ENCODE measurements at regions of chr18 and their contacts with region 1.

Region 1: GRCh38 chr18:44679056-44679905 is 1.4 kb upstream of the SETBP1 start:
- DNase-seq: peak; percentile 87
- H3K4me3 ChIP-seq: peak overlapping the region; percentile 67
- H3K27ac ChIP-seq: peak overlapping the region; percentile 88
- H3K4me1 ChIP-seq: peaks cover 22% of the 10 kb centered on the region
- H3K27me3 ChIP-seq: peaks cover 5% of the 10 kb centered on the region
- CTCF ChIP-seq: peak; percentile 63

Region 2: DNA sequence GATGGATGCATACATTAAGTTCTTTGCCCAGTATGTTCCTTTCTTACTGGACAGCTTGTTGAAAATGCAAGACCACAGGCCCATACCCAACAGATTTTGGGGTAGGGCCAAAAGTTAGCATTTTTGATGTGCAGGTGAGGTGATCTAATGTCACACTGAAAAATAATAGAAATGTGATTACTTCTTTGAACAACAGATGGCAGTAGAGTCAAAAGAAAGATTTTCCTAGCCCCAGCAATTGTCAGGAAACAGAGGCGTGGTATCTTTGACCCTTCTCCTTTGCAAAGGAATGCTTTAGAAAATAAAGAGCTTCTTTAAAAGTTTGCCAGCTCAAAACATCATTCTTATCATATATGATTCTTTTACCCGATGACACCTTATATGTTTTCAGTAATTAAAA is 1058.3 kb before region 1 on chr18:
- CTCF ChIA-PET with region 1: interaction called, 3 read pairs
- POLR2A ChIA-PET with region 1: no interaction called
- intact Hi-C with region 1: loop called (anchors 10 kb)
- DNase-seq: peak; percentile 69
- H3K4me3 ChIP-seq: no peak overlapping the region
- H3K27ac ChIP-seq: no peak overlapping the region
- H3K4me1 ChIP-seq: peaks cover 26% of the 10 kb centered on the region
- H3K27me3 ChIP-seq: no peaks in the 10 kb centered on the region
- CTCF ChIP-seq: peak; percentile 66

Region 3: DNA sequence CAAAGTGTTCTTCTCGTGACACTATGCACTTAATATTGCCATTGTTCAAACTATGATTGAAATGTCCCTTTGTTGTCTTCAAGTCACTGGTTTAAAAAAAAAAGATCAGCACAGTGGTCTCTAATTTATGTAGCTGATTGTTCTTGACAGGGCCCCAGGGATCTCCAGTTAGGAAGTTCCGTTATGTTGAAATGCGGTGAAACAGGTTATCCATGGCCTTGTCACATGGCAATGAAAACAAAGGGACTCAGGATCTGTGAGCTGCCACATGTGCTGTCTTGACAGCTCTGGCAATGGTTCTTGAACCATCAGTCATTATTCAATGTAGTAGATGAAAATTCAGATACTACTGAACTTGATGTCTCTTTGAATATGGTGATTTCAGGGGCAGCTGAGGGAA is 148.8 kb after region 1 on chr18:
- CTCF ChIA-PET with region 1: interaction called, 5 read pairs
- POLR2A ChIA-PET with region 1: interaction called, 15 read pairs
- intact Hi-C with region 1: no loop called
- DNase-seq: peak; percentile 77
- H3K4me3 ChIP-seq: no peak overlapping the region
- H3K27ac ChIP-seq: peak overlapping the region; percentile 71
- H3K4me1 ChIP-seq: peaks cover 41% of the 10 kb centered on the region
- H3K27me3 ChIP-seq: no peaks in the 10 kb centered on the region
- CTCF ChIP-seq: no peak

Region 4: DNA sequence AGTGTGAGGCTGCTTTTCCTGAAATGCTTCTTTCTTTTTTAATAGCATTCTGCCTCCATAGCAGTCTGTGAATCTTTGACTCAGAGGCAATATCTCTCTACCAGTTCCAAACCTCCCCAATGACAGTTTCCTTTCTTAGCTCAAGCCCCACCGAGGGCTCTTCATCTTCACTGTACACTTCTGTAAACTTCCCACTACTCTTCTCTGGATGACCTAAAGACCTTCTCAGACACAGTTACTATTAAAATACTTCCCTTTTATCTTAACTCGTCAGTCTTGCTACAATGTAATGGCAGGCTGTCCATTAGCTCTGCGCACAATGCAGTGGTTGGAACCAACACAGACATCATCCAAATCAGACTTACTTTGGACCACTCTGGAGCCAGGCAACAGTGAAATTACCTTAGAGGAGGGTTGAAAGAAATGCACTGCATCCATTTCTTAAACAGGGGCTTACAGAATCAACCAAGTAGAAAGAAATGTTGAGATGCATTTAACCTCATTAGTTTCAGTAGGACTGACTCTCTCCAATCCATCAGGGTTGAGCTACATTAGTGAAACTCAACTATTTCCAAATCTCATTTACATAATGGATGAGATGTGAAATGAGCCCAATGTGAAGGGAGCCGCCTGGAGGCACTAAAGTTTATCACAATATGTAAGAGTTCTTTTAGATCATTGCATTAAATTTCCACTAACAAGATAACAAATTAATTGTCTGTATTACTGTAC is 345.2 kb after region 1 on chr18:
- CTCF ChIA-PET with region 1: no interaction called
- POLR2A ChIA-PET with region 1: no interaction called
- intact Hi-C with region 1: loop called (anchors 5 kb)
- DNase-seq: peak; percentile 14
- H3K4me3 ChIP-seq: no peak overlapping the region
- H3K27ac ChIP-seq: no peak overlapping the region
- H3K4me1 ChIP-seq: no peaks in the 10 kb centered on the region
- H3K27me3 ChIP-seq: no peaks in the 10 kb centered on the region
- CTCF ChIP-seq: peak; percentile 37; the same call in 1 of the 2 replicates

Region 5: DNA sequence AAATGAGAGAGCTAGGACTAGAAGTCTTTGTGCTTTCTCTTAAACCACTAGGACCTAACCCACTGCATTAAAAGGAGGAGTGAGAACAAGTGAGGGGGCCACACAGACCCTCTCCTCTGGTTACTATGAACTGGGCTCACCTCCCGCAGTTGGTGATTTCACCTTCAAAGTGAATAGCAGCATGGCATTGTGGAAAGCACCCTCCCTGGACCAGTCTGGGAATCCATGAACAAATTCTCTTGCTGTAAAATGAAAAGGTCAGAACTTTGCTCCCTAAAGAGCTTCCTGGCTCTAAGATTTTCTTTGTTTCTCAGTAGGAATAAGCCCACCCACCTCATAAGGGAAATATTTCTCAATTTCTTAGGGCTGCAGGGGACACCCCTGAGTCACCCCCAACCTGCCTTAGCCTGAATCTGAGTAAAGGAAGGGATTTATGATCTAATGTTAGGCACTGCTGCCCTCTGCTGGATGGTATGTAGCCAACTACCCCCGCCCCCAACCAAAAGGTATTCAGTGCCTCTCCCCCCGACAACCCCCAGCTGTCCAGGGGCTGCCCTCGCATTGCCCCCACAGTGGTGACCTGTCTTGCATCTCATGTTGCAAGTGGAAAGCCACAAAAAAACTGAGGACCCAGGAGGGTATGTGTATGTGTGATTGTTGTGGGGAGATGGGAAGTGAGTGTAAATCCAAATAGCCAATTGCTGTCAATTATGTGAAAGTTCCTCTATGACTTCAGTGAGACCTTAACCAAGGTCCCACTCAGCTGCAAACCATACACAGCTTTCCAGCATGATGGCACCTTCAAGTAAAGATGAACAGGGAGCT is 705.1 kb after region 1 on chr18:
- CTCF ChIA-PET with region 1: no interaction called
- POLR2A ChIA-PET with region 1: no interaction called
- intact Hi-C with region 1: loop called (anchors 10 kb)
- DNase-seq: peak; percentile 60
- H3K4me3 ChIP-seq: no peak overlapping the region
- H3K27ac ChIP-seq: no peak overlapping the region
- H3K4me1 ChIP-seq: no peaks in the 10 kb centered on the region
- H3K27me3 ChIP-seq: peaks cover 9% of the 10 kb centered on the region
- CTCF ChIP-seq: peak; percentile 78